HEK293 (cell line): ENCODE measurements at regions of chr6 and their contacts with region 1.

Region 1: DNA sequence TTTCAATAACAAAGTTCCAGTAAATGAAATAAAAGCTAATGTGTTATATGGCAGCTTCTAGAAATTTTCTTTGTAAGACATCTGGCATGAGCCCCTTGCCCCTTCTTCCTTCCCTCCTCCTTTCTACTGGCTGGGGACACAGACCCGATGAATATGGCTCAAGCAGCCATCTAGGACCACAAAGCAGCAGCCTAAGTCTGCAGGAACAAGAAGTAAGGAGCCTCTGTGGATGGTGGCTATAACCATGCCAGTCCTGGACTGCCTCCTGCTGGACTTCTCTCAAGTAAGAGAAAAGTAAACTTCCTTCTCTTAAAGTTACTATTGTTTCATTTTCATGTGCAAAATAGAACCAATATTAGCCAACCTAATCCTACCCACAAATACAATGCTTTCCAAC is 114.9 kb upstream of the DST start:
- H3K4me3 ChIP-seq: no peak overlapping the region
- H3K27ac ChIP-seq: no peak overlapping the region
- H3K4me1 ChIP-seq: peaks cover 11% of the 10 kb centered on the region; the same call in 1 of the 2 replicates
- CTCF ChIP-seq: peak; percentile 44; the same call in 1 of the 2 replicates

Region 2: GRCh38 chr6:56746767-56747504 is 10.7 kb before region 1 on chr6:
- CTCF ChIA-PET with region 1: interaction called, 17 read pairs
- POLR2A ChIA-PET with region 1: no interaction called
- H3K4me3 ChIP-seq: no peak overlapping the region
- H3K27ac ChIP-seq: no peak overlapping the region
- H3K4me1 ChIP-seq: peaks cover 38% of the 10 kb centered on the region
- CTCF ChIP-seq: no peak

Region 3: GRCh38 chr6:56843573-56844349 is 86.2 kb after region 1 on chr6:
- CTCF ChIA-PET with region 1: interaction called, 13 read pairs
- POLR2A ChIA-PET with region 1: no interaction called
- H3K4me3 ChIP-seq: peak overlapping the region; percentile 74
- H3K27ac ChIP-seq: peak overlapping the region; percentile 94
- H3K4me1 ChIP-seq: peaks cover 7% of the 10 kb centered on the region
- CTCF ChIP-seq: peak; percentile 95